ENCODE measurements at regions of chr7 and their contacts with region 1.

Region 1: DNA sequence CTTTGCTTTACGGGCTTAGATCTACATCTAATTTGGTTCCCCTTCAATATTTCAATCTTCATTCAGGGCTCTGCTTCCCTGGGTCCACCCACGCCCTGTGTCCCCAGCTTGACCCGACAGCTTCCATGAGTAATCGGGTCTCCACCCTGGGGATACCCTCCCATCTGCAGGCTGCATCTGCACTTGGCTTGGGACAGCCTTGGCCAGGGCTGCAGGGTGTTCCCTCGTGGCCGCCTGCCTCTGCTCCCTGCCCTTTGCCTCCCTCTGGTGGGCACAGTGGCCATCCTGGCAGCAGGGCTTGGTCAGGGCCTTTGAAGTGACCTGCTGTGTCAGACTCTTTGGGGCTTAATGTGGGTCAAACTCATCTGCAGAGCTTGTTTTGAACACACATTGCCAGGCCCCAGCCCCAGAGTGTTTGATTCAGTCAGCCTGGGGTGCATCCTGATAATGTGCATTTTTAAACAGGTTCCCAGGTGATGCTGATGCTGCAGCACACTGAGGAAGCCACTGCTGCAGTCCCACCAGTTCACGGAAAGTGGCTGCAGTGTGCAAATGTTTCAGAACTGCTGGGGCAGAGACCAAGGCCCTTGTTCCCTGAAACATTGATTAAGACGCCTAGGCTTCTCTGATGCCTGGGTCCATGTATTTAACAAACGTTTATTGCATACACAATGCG is 80.7 kb upstream of the SEC61G start:
- DNase-seq: no peak
- H3K4me3 ChIP-seq: no peak overlapping the region
- H3K27ac ChIP-seq: no peak overlapping the region
- H3K4me1 ChIP-seq: peaks cover 10 to 31% (median 18%) of the 10 kb centered on the region in 4 donors
- H3K27me3 ChIP-seq: no peaks in the 10 kb centered on the region
- CTCF ChIP-seq: peak; percentile 65 to 75 (median 66)
- EP300 ChIP-seq: no peak
- POLR2A ChIP-seq: no peak

Region 2: GRCh38 chr7:54397836-54398612 is 441.7 kb before region 1 on chr7:
- intact Hi-C with region 1: no loop called
- DNase-seq: no peak
- H3K4me3 ChIP-seq: no peak overlapping the region
- H3K27ac ChIP-seq: no peak overlapping the region
- H3K4me1 ChIP-seq: no peaks in the 10 kb centered on the region
- H3K27me3 ChIP-seq: no peaks in the 10 kb centered on the region
- CTCF ChIP-seq: no peak
- EP300 ChIP-seq: no peak
- POLR2A ChIP-seq: no peak

Region 3: GRCh38 chr7:54788664-54789063 is 51.0 kb before region 1 on chr7:
- intact Hi-C with region 1: loop called (anchors 5 kb)
- DNase-seq: no peak
- H3K4me3 ChIP-seq: peak overlapping the region in 1 of 4 donors; percentile 10
- H3K27ac ChIP-seq: no peak overlapping the region
- H3K4me1 ChIP-seq: peaks cover 4 to 10% (median 8%) of the 10 kb centered on the region in 4 donors
- H3K27me3 ChIP-seq: no peaks in the 10 kb centered on the region
- CTCF ChIP-seq: peak; percentile 71 to 80 (median 74)
- EP300 ChIP-seq: no peak
- POLR2A ChIP-seq: no peak

Measured in esophagus muscularis mucosa (tissue), 4 donors.